ENCODE measurements at regions of chr2 and their contacts with region 1.

Region 1: DNA sequence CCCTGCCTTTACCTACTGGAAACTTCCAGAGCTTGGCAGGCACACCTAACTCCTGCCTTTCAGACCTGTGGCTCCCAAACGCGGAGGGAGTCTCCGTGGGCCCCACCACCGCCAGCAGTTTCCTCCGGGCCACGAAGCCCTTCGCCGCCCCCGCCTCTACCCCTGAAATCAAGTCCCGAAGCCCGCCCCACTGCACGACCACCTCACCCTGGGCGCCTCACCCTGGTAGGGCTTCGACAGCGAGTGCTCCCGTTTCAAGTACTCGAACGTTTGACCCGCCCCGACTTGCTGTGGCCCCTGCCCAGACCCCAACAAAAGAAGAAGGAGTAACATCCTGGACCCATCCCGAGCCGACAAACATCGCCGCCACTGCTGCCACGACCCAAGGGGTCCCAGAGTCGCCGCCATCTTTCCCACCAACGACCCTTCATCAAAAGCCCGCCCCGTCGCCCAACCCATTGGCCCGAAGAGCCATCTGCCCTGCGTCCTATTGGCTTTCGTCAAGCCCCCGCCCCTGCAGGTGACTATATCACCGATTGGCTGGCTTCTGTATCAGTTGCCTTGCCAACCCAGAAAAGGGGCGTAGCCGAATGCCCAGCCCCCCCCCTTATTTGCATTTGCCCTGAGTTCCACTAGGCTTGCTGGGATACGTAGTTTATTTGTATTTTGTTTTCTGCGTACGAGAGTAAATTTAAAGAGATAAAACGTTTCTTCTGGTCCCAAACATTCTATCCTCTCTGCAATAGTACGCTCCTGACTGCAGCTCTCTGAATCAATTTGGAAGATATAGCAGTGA is at the start of gene LMAN2L:
- DNase-seq: peak; percentile 98
- H3K4me3 Mint-ChIP-seq: peak within 1 kb of the TSS; percentile 96
- H3K27ac Mint-ChIP-seq: peak within 1 kb of the TSS; percentile 87
- H3K4me1 Mint-ChIP-seq: peaks cover 30% of the 10 kb centered on the region
- H3K27me3 Mint-ChIP-seq: peaks cover 3% of the 10 kb centered on the region
- total RNA-seq, gene LMAN2L: 6.5 and 7.3 TPM in 2 replicates

Region 2: GRCh38 chr2:96638144-96639121 is 101.4 kb before region 1 on chr2 and contains the start of gene KANSL3:
- intact Hi-C with region 1: loop called (anchors 1 kb)
- DNase-seq: peak; percentile 98
- H3K4me3 Mint-ChIP-seq: peak within 1 kb of the TSS; percentile 97
- H3K27ac Mint-ChIP-seq: peak within 1 kb of the TSS; percentile 97
- H3K4me1 Mint-ChIP-seq: peaks cover 24% of the 10 kb centered on the region
- H3K27me3 Mint-ChIP-seq: peaks cover 3% of the 10 kb centered on the region
- total RNA-seq, gene KANSL3: 45.5 and 46.5 TPM in 2 replicates

Region 3: DNA sequence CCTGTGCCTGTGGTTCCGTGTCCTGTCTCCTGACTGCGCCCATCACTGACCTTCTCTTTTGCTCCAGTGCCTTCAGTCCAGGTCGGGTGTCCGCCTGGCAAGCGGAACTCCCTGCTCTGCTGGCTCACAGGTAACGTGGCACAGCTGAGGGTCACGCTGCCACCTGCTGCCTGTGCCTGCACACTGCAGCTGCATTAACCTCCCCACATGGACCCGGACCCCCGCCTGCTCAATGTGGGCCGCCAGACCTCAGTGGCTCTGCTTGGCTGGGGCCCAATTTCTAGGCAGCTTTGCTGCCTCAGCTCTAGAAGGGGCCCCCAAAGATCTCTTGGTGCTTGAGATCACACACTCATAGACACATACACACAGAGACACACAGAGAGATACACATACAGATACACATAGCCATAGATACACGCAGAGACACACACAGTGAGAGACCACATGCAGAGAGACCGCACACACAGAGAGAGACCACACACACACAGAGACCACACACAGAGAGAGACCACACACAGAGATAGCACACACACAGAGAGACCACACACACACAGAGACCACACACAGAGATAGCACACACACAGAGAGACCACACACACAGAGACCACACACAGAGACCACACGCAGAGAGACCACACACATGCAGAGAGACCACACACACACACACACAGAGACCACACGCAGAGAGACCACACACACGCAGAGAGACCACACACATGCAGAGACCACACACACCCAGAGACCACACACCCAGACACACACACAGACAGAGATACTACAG is 61.4 kb after region 1 on chr2:
- intact Hi-C with region 1: loop called (anchors 1 kb)
- DNase-seq: peak; percentile 91
- H3K4me3 Mint-ChIP-seq: no peak overlapping the region
- H3K27ac Mint-ChIP-seq: no peak overlapping the region
- H3K4me1 Mint-ChIP-seq: peaks cover 1% of the 10 kb centered on the region
- H3K27me3 Mint-ChIP-seq: no peaks in the 10 kb centered on the region